ENCODE measurements at regions of chr17 and their contacts with region 1.

Region 1: GRCh38 chr17:2592971-2593820 is at the start of gene PAFAH1B1:
- DNase-seq: peak; percentile 91 to 99 (median 95)
- ATAC-seq: peak; percentile 70
- H3K4me3 ChIP-seq: peak within 1 kb of the TSS; percentile 65
- H3K4me3 Mint-ChIP-seq: peak within 1 kb of the TSS; percentile 99
- H3K27ac ChIP-seq: peak within 1 kb of the TSS; percentile 95
- H3K27ac Mint-ChIP-seq: peak within 1 kb of the TSS; percentile 87
- H3K4me1 ChIP-seq: peaks cover 25% of the 10 kb centered on the region
- H3K4me1 Mint-ChIP-seq: peaks cover 38% of the 10 kb centered on the region
- H3K27me3 ChIP-seq: no peaks in the 10 kb centered on the region
- H3K27me3 Mint-ChIP-seq: no peaks in the 10 kb centered on the region
- CTCF ChIP-seq: no peak
- total RNA-seq, gene PAFAH1B1: 120 to 123 TPM

Region 2: GRCh38 chr17:2401426-2402221 is 191.6 kb before region 1 on chr17:
- CTCF ChIA-PET with region 1: no interaction called
- POLR2A ChIA-PET with region 1: interaction called, 7 read pairs
- intact Hi-C with region 1: loop called in 1 of 2 experiments (anchors 10 kb)
- DNase-seq: peak; percentile 97 to 99 (median 99)
- ATAC-seq: peak; percentile 58
- H3K4me3 ChIP-seq: peak overlapping the region; percentile 93
- H3K4me3 Mint-ChIP-seq: peak overlapping the region; percentile 100
- H3K27ac ChIP-seq: peak overlapping the region; percentile 93 to 100
- H3K27ac Mint-ChIP-seq: peak overlapping the region; percentile 99
- H3K4me1 ChIP-seq: peaks cover 51% of the 10 kb centered on the region
- H3K4me1 Mint-ChIP-seq: peaks cover 47% of the 10 kb centered on the region
- H3K27me3 ChIP-seq: no peaks in the 10 kb centered on the region
- H3K27me3 Mint-ChIP-seq: no peaks in the 10 kb centered on the region
- CTCF ChIP-seq: no peak

Region 3: DNA sequence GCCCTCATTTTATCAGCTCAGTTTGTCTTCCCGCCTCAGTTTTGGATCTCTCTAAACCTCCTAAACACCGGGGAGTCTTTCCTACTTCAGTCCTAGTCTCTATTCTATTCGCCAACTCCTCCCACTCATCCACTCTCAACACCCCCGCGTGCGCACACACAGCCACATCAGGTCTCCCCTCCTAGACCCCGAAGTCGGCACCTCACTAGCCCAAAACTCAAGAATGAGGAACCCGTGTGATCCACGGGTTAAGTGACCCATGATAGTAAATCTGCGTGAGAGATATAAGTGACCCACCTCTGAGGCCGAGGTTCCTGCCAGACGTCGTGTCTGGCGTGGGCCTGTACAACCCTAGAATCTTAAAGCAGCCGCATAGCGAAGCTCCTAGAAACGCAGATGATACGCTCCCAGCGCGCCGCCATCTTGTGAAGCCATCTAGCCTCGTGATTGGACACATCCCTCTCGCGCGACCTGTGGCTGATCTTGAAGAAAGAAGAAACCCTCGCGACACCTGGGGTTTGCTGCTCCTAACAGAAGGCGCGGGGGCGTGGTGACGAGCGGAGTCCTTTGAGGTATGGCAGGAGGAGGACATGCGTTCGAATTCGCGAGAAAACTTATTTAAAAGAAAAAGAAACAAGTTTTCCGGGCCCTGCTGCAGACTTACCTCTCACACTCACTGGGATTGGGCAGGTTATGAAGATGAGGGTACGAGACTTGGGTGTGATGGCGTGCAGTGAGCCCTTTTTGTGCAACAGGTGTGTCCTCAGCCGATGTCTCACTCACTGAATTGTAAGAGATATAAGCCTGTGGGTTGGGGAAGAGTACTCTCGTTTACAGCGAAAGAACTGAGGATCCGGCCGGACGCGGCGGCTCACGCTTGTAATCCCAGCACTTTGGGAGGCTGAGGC is 81.5 kb before region 1 on chr17 and contains the start of gene METTL16:
- CTCF ChIA-PET with region 1: no interaction called
- POLR2A ChIA-PET with region 1: interaction called, 46 read pairs
- intact Hi-C with region 1: loop called (anchors 1 to 5 kb)
- DNase-seq: peak; percentile 91 to 99 (median 96)
- ATAC-seq: peak; percentile 98
- H3K4me3 ChIP-seq: peak within 1 kb of the TSS; percentile 70
- H3K4me3 Mint-ChIP-seq: no peak within 1 kb of the TSS
- H3K27ac ChIP-seq: peak within 1 kb of the TSS; percentile 92 to 96
- H3K27ac Mint-ChIP-seq: no peak within 1 kb of the TSS
- H3K4me1 ChIP-seq: peaks cover 34% of the 10 kb centered on the region
- H3K4me1 Mint-ChIP-seq: peaks cover 12% of the 10 kb centered on the region
- H3K27me3 ChIP-seq: no peaks in the 10 kb centered on the region
- H3K27me3 Mint-ChIP-seq: no peaks in the 10 kb centered on the region
- CTCF ChIP-seq: no peak
- total RNA-seq, gene METTL16: 55.7 to 58.0 TPM

Region 4: GRCh38 chr17:2634361-2634960 is 41.3 kb after region 1 on chr17:
- CTCF ChIA-PET with region 1: no interaction called
- POLR2A ChIA-PET with region 1: no interaction called
- intact Hi-C with region 1: loop called (anchors 5 kb)
- DNase-seq: no peak
- ATAC-seq: no peak
- H3K4me3 ChIP-seq: no peak overlapping the region
- H3K4me3 Mint-ChIP-seq: no peak overlapping the region
- H3K27ac ChIP-seq: no peak overlapping the region
- H3K27ac Mint-ChIP-seq: peak overlapping the region; percentile 72
- H3K4me1 ChIP-seq: peaks cover 25% of the 10 kb centered on the region
- H3K4me1 Mint-ChIP-seq: peaks cover 71% of the 10 kb centered on the region
- H3K27me3 ChIP-seq: no peaks in the 10 kb centered on the region
- H3K27me3 Mint-ChIP-seq: no peaks in the 10 kb centered on the region
- CTCF ChIP-seq: no peak

Region 5: DNA sequence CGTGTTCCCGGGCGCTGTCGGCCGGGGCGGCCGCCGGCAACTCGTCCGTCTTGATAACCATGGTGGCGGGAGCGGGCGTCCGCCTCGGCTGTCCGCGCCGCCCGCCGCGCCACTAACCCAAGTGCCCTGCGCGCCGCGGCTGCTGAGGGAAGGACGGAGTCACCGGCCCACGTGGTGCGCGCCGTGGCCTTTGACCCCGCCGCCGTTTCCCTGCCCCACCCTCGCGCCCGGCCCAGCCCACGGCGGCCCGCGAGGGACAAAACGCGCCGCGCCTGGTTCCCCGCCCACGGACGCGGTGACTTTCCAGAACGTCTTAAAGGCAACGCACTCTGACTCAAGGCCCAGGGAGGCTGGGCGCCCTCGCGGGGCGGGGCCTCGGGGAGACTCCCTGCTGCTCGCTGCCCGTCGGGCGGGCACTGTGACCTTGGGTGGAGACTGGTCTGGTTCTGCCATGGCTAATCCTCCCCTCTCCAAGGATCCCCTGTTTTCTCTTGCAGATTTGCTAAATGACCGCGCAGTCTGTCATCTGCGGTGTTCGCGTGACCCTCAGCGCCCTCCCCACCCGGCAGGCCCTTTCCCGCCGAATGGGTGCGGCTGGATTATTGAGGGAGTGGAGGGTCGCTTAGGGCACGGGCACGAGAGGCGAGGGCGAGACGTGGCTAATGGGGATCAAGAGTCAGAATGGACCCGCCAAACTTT is 118.6 kb after region 1 on chr17 and contains the start of gene CLUH:
- CTCF ChIA-PET with region 1: no interaction called
- POLR2A ChIA-PET with region 1: interaction called, 4 read pairs
- intact Hi-C with region 1: loop called in 1 of 2 experiments (anchors 1 kb)
- DNase-seq: peak; percentile 88 to 98 (median 94)
- ATAC-seq: peak; percentile 92
- H3K4me3 ChIP-seq: peak within 1 kb of the TSS; percentile 71
- H3K4me3 Mint-ChIP-seq: peak within 1 kb of the TSS; percentile 92
- H3K27ac ChIP-seq: peak within 1 kb of the TSS in 1 of 2 donors; percentile 30
- H3K27ac Mint-ChIP-seq: peak within 1 kb of the TSS; percentile 84
- H3K4me1 ChIP-seq: peaks cover 53% of the 10 kb centered on the region
- H3K4me1 Mint-ChIP-seq: peaks cover 28% of the 10 kb centered on the region
- H3K27me3 ChIP-seq: no peaks in the 10 kb centered on the region
- H3K27me3 Mint-ChIP-seq: no peaks in the 10 kb centered on the region
- CTCF ChIP-seq: no peak
- total RNA-seq, gene CLUH: 34.4 to 34.8 TPM

Region 6: DNA sequence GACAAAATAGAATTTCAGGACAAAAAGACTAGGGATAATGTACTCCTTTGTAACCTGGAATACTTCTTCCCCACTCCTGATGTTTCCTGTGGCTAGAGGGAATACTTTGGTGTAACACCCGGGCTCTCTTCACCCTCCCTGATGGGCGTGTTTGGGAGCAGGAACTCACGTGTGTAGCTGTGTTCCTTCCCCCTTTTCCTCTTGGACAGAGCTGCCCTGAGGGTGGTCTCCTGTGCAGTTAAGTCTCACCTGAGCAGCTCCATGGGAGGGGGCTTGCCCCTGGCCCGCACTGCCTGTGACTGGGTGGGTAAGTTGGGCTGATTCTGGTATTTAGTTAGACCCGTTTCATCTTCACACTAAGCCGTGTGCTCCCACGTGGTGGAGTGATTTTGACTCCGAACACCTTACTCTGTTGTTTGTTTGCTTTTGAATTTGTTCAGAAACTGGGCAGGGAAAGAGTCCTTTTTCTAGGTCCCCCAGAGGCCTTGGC is 382.3 kb after region 1 on chr17:
- CTCF ChIA-PET with region 1: no interaction called
- POLR2A ChIA-PET with region 1: no interaction called
- intact Hi-C with region 1: no loop called
- DNase-seq: no peak
- ATAC-seq: no peak
- H3K4me3 ChIP-seq: no peak overlapping the region
- H3K4me3 Mint-ChIP-seq: no peak overlapping the region
- H3K27ac ChIP-seq: no peak overlapping the region
- H3K27ac Mint-ChIP-seq: no peak overlapping the region
- H3K4me1 ChIP-seq: no peaks in the 10 kb centered on the region
- H3K4me1 Mint-ChIP-seq: no peaks in the 10 kb centered on the region
- H3K27me3 ChIP-seq: no peaks in the 10 kb centered on the region
- H3K27me3 Mint-ChIP-seq: no peaks in the 10 kb centered on the region
- CTCF ChIP-seq: no peak

Measured in CD4-positive, alpha-beta T cell (primary cell).